ENCODE measurements at regions of chr13 and their contacts with region 1.

Region 1: DNA sequence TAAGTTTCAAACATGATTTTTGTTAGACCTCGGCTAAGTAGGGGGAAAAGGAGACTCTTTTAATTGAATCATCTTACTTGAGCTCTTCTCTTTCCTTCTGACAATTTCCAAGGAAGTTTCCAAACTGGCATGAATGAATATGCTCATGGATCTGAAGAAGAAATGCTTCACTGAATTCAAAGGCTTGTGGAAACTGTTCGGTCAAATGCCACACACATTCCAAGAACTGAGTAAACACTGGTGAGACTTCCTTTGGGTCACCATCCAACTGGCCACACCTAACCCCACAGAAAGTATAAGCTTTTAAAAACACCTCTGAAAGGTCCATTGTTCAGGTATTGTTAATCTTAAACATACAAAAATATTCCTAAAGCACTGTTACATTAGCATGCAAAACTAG is 33.6 kb downstream of the MTMR6 start:
- DNase-seq: peak; percentile 77
- ATAC-seq: peak; percentile 94
- H3K4me3 ChIP-seq: peak overlapping the region; percentile 34; the same call in 1 of the 2 replicates
- H3K27ac ChIP-seq: peak overlapping the region; percentile 78
- H3K4me1 ChIP-seq: peaks cover 21% of the 10 kb centered on the region
- H3K27me3 ChIP-seq: no peaks in the 10 kb centered on the region
- CTCF ChIP-seq: no peak

Region 2: GRCh38 chr13:25237083-25237482 is 16.6 kb before region 1 on chr13:
- CTCF ChIA-PET with region 1: no interaction called
- POLR2A ChIA-PET with region 1: no interaction called
- intact Hi-C with region 1: no loop called
- DNase-seq: no peak
- ATAC-seq: no peak
- H3K4me3 ChIP-seq: no peak overlapping the region
- H3K27ac ChIP-seq: no peak overlapping the region
- H3K4me1 ChIP-seq: no peaks in the 10 kb centered on the region
- H3K27me3 ChIP-seq: no peaks in the 10 kb centered on the region
- CTCF ChIP-seq: no peak

Region 3: DNA sequence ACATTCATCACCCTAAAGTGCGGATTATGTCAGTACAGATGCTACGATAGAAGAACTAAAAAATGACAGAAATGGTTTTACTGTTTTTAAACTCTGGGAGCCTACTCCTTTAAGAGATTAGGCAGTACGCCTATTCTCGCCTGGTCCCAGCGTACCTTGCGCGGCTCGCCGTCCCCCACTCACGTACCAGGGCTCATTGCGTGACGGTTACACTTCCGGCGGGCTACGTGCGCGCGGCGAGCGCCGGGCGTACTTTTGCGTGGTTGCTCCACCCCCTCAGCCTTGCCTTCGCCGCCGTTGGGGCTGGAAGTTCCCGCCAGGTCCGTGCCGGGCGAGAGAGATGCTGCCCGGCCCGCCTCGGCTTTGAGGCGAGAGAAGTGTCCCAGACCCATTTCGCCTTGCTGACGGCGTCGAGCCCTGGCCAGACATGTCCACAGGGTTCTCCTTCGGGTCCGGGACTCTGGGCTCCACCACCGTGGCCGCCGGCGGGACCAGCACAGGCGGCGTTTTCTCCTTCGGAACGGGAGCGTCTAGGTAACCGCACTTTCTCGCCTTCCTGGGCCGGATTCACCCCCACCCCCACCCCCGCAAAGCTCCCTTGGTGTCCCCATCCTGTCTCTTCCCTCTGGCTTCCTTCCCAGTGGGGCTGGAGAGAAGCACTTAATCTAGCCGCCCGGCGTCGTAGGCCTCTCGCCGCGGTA is 47.8 kb after region 1 on chr13 and contains the start of gene NUP58:
- CTCF ChIA-PET with region 1: no interaction called
- POLR2A ChIA-PET with region 1: no interaction called
- intact Hi-C with region 1: loop called (anchors 2 kb)
- DNase-seq: peak; percentile 94
- ATAC-seq: peak; percentile 99
- H3K4me3 ChIP-seq: peak within 1 kb of the TSS; percentile 89
- H3K27ac ChIP-seq: peak within 1 kb of the TSS; percentile 45
- H3K4me1 ChIP-seq: peaks cover 11% of the 10 kb centered on the region; the same call in 1 of the 2 replicates
- H3K27me3 ChIP-seq: no peaks in the 10 kb centered on the region
- CTCF ChIP-seq: no peak
- total RNA-seq, gene NUP58: 46.1 and 63.8 TPM in 2 replicates

Region 4: GRCh38 chr13:25570185-25570584 is 316.5 kb after region 1 on chr13:
- CTCF ChIA-PET with region 1: no interaction called
- POLR2A ChIA-PET with region 1: no interaction called
- intact Hi-C with region 1: no loop called
- DNase-seq: no peak
- ATAC-seq: no peak
- H3K4me3 ChIP-seq: no peak overlapping the region
- H3K27ac ChIP-seq: no peak overlapping the region
- H3K4me1 ChIP-seq: no peaks in the 10 kb centered on the region
- H3K27me3 ChIP-seq: peaks cover 73% of the 10 kb centered on the region
- CTCF ChIP-seq: no peak